Heart right ventricle (tissue), 16 donors: ENCODE measurements at regions of chr10 and their contacts with region 1.

Region 1: GRCh38 chr10:17249820-17250219 is 21.8 kb downstream of the VIM start:
- DNase-seq: no peak
- ATAC-seq: no peak
- H3K4me3 ChIP-seq: no peak overlapping the region
- H3K27ac ChIP-seq: no peak overlapping the region
- H3K4me1 ChIP-seq: no peaks in the 10 kb centered on the region
- H3K27me3 ChIP-seq: no peaks in the 10 kb centered on the region
- CTCF ChIP-seq: peak in 5 of 9 donors; percentile 12 to 33 (median 17)

Region 2: DNA sequence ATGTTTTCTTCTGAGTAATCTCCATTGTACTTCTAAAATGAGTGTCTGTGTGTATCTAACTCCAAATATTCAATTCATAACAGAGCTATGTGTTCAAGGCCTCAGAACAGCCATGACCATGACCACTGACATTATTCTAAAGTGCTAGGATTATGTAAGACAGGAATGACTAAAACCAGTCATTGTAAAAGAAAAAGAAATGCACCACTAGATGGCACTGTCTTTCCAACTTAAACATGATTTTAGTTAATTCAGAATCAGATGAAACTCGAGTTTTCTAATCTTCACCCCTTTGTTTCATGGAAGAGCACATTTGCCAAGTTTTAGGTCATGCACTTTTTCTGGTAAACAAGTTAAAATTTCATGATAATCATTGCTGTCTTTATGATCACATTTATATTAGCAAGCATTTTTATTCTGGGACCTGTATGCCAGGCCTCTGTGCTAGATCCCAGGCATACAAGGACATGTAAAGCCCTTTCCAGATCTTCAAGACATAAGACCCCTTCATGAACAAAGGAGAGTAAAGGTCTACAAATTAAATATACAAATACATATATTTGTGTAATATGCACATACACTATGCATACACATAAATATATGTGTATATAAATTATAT is 406.5 kb before region 1 on chr10:
- intact Hi-C with region 1: loop called in 4 of 10 experiments (anchors 5 kb)
- DNase-seq: peak in 1 of 2 donors; percentile 17
- ATAC-seq: peak in 6 of 8 donors; percentile 64 to 73 (median 70)
- H3K4me3 ChIP-seq: no peak overlapping the region
- H3K27ac ChIP-seq: no peak overlapping the region
- H3K4me1 ChIP-seq: peaks cover 0 to 28% (median 0%) of the 10 kb centered on the region in 9 donors
- H3K27me3 ChIP-seq: no peaks in the 10 kb centered on the region
- CTCF ChIP-seq: peak; percentile 54 to 80 (median 69)

Region 3: DNA sequence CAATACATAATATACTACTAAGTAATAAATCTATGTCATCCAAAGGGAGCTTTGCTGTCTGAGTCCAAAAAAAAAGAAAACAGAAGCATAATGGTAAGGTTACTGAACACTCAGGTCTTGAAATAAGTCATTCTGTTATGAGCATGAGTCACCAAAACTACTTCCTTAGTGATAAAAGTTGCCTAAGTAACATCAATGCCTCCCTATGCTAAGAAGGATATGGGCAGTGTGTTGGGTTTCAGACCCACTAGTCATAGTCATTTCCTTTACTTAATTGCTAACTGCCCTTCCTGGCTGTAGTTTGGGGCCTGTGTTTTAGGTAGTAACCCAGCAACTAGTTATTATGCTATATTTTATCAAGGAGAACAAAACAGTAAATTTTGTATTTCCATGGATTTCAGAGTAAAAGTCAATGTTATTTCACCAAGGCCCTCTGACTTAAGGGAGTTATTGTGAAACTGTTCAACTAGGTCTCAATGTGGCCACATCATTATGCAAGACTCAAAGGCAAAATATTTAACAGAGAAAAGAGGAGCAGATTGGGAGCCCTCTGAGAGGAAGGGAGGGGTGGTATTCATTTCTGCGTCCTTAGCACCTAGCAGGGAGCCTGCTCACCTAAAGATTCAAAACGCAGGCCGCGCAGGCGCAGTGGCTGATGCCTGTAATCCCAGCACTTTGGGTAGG is 33.5 kb before region 1 on chr10:
- intact Hi-C with region 1: no loop called
- DNase-seq: no peak
- ATAC-seq: peak; percentile 83 to 95 (median 93)
- H3K4me3 ChIP-seq: no peak overlapping the region
- H3K27ac ChIP-seq: peak overlapping the region in 9 of 10 donors; percentile 23 to 93 (median 73)
- H3K4me1 ChIP-seq: peaks cover 0 to 57% (median 4%) of the 10 kb centered on the region in 9 donors
- H3K27me3 ChIP-seq: no peaks in the 10 kb centered on the region
- CTCF ChIP-seq: no peak

Region 4: DNA sequence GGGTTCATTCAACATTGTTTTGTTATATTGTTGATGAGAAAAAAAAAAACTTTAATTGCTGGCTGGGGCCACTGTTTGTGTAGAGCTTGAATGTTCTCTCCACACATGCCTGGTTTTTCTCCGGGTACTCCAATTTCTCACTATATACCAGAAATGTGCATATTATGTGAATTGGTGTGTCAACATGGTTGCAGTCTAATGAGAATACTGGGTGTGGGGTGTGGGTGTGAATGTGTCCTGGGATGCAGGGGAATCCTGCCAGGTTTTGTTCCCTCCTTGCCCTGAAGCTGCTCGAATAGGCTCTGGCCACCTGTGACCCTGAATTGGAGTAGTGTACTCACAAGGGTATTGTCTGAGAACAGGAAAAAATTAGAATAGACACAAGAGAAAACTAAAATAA is 59.6 kb after region 1 on chr10:
- intact Hi-C with region 1: no loop called
- DNase-seq: no peak
- ATAC-seq: no peak
- H3K4me3 ChIP-seq: no peak overlapping the region
- H3K27ac ChIP-seq: no peak overlapping the region
- H3K4me1 ChIP-seq: no peaks in the 10 kb centered on the region
- H3K27me3 ChIP-seq: no peaks in the 10 kb centered on the region
- CTCF ChIP-seq: no peak